Activated naive CD4-positive, alpha-beta T cell treated with anti-CD3 and anti-CD28 coated beads for 36 hours (primary cell): ENCODE measurements at regions of chr1 and their contacts with region 1.

Region 1: DNA sequence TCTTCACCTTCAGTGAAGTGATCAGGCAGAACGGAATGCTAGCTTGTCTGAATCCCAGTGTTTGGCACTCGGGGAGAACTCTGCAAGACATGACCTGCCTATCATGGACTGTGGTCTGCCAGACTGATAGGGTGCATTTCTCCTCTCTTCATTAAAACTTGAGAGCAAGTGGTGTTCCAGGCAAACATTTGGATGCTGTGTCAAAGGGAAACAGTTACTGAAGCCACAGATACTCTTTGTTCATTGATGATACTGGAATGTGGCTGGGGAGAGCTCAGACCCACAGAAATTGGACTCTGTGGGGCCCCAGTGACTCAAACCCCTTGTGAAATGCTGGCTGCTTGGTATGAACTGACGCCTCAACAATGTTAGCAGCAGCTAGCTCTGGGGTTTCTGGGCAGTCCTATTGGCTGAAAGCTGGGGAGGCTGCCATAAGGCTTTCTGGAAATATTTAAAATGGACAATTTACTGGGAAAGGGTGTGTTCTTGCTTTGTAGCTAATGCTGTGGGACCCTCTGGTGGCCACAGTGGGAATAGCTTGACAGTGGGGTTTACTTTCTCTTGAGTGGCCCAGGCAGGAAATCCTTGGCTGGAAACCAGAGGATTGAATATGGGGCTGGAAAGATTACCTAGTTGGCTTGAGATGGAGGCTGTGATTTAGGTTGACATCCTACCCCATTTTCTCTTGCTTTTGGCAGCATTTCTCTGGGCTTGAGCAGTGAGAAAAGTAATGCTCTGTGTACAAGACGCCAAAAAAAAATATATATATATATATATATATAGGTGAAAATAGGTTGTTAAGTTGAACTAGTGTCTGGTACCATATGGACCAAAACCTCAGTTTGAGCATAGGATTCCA is 8.0 kb upstream of the S100A10 start:
- DNase-seq: peak; percentile 89
- H3K4me3 Mint-ChIP-seq: no peak overlapping the region
- H3K27ac Mint-ChIP-seq: no peak overlapping the region
- H3K4me1 Mint-ChIP-seq: peaks cover 1% of the 10 kb centered on the region
- H3K27me3 Mint-ChIP-seq: peaks cover 2% of the 10 kb centered on the region

Region 2: DNA sequence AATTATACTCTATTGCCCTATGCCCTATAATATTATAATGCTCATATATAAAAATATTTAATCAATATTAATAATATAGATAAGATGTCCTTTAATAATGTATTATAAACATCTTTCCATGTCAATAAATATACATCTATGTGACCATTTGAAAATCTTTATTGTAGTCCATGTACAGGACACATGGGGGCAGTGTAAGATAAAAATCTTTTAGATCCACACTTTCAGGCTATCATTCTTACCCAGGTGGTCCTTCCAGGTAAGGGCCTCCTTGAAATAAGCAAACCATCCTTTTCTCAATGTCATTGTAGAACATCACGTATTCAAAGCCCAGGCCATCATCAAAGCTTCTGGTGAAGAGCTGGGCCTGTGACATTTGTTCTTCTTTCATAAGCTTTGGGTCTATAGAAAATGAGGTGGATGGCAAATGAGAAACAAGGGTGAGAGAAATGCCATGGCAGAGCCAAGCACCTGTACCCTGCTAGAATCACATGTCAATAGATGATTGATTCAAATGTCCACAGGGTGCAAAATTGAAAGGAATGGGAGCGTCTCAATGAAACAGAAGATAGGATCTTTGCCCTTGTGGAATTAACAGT is 112.5 kb before region 1 on chr1:
- CTCF ChIA-PET with region 1: interaction called, 27 read pairs
- intact Hi-C with region 1: loop called (anchors 1 kb)
- DNase-seq: no peak
- H3K4me3 Mint-ChIP-seq: no peak overlapping the region
- H3K27ac Mint-ChIP-seq: no peak overlapping the region
- H3K4me1 Mint-ChIP-seq: peaks cover 27% of the 10 kb centered on the region
- H3K27me3 Mint-ChIP-seq: no peaks in the 10 kb centered on the region

Region 3: DNA sequence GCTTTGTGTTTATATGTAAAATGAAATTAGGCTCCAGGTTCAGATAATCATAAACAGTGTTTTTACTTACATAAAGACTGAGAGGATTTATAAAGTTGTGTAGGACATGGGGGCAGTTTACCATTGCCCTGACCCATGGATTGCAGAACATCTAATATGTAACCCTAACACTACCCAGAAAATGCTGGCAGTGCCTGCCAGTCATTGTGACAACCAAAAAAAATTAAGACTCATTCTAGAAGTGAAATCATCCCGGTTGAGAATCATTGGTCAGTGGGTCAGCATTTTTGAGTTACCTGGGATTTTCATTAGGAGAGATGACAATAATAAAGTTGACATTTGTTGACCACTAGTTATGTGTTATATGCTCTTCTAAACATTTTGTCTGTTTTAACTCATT is 61.1 kb before region 1 on chr1:
- CTCF ChIA-PET with region 1: interaction called, 233 read pairs
- intact Hi-C with region 1: no loop called
- DNase-seq: no peak
- H3K4me3 Mint-ChIP-seq: no peak overlapping the region
- H3K27ac Mint-ChIP-seq: no peak overlapping the region
- H3K4me1 Mint-ChIP-seq: peaks cover 18% of the 10 kb centered on the region
- H3K27me3 Mint-ChIP-seq: no peaks in the 10 kb centered on the region

Region 4: DNA sequence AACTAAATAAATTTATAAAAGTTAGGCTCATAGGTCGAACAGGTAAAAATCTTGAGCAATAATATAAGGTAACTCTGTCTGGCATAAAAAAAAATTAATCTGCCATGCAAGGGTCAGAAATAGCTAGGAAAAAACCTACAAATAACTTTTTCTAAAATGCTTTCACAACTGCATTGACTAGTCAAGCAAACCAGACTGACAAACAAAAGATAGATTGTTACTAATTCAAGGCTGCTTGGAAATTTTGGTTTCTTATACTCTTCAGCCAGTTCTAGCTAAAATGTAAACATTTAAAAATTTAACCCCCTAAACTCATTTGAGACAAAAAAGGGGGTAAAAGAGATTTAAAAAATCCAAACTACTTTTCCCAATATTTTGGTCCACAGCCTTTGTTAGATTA is 48.8 kb before region 1 on chr1:
- CTCF ChIA-PET with region 1: interaction called, 11 read pairs
- intact Hi-C with region 1: no loop called
- DNase-seq: no peak
- H3K4me3 Mint-ChIP-seq: no peak overlapping the region
- H3K27ac Mint-ChIP-seq: no peak overlapping the region
- H3K4me1 Mint-ChIP-seq: no peaks in the 10 kb centered on the region
- H3K27me3 Mint-ChIP-seq: no peaks in the 10 kb centered on the region

Region 5: GRCh38 chr1:151976858-151977257 is 24.8 kb before region 1 on chr1:
- CTCF ChIA-PET with region 1: interaction called, 206 read pairs
- intact Hi-C with region 1: no loop called
- DNase-seq: no peak
- H3K4me3 Mint-ChIP-seq: no peak overlapping the region
- H3K27ac Mint-ChIP-seq: no peak overlapping the region
- H3K4me1 Mint-ChIP-seq: peaks cover 19% of the 10 kb centered on the region
- H3K27me3 Mint-ChIP-seq: peaks cover 2% of the 10 kb centered on the region

Region 6: GRCh38 chr1:152013664-152014237 is 12.1 kb after region 1 on chr1:
- CTCF ChIA-PET with region 1: interaction called, 43 read pairs
- intact Hi-C with region 1: no loop called
- DNase-seq: peak; percentile 66
- H3K4me3 Mint-ChIP-seq: no peak overlapping the region
- H3K27ac Mint-ChIP-seq: no peak overlapping the region
- H3K4me1 Mint-ChIP-seq: no peaks in the 10 kb centered on the region
- H3K27me3 Mint-ChIP-seq: peaks cover 4% of the 10 kb centered on the region